Heart left ventricle (tissue), 16 donors: ENCODE measurements at regions of chr12 and their contacts with region 1.

Region 1: GRCh38 chr12:126874427-126875026 is 1392.4 kb upstream of the TMEM132C start:
- DNase-seq: peak; percentile 31 to 69 (median 41)
- ATAC-seq: peak in 3 of 4 donors; percentile 66 to 75 (median 71)
- H3K4me3 ChIP-seq: no peak overlapping the region
- H3K27ac ChIP-seq: no peak overlapping the region
- H3K4me1 ChIP-seq: no peaks in the 10 kb centered on the region
- H3K27me3 ChIP-seq: peaks cover 0 to 3% (median 0%) of the 10 kb centered on the region in 9 donors
- CTCF ChIP-seq: peak; percentile 62 to 90 (median 84)
- POLR2A ChIP-seq: no peak

Region 2: DNA sequence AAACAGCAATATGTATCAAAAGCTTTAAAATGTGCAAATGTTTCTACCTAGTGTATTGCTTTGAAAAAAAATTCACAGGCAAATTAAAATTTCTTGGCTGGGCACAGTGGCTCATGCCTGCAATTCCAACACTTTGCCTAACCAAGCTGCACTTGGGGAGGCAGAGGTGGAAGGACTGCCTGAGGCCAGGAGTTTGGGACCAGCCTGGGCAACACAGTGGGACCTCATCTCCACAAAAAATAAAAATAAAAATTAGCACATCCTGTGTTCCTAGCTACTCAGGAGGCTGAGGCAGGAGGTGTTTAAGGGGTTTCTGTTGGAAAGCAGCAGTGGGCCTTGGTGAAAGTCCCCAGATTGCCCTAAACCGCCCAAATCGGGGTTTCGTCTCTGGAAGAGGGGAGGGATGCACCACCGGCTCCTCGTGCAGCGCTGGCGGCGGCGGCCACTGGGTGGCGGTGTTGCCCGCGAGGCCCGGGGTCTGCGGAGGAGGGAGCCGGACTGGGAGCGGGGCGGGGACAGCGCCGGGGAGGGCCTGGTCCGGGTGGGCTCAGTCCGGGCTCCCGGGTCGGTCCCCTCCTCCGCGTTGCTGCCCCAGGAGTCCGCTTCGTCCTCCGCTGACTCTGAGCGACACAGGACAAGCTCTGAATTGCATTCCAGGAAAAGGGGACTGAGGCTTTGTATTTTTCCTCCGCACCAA is 1543.7 kb before region 1 on chr12:
- intact Hi-C with region 1: loop called in 3 of 10 experiments (anchors 5 to 10 kb)
- DNase-seq: peak; percentile 54 to 85 (median 61)
- ATAC-seq: peak; percentile 51 to 98 (median 90)
- H3K4me3 ChIP-seq: peak overlapping the region; percentile 11 to 59 (median 44)
- H3K27ac ChIP-seq: peak overlapping the region in 1 of 12 donors; percentile 32
- H3K4me1 ChIP-seq: peaks cover 0 to 11% (median 3%) of the 10 kb centered on the region in 12 donors
- H3K27me3 ChIP-seq: peaks cover 0 to 47% (median 17%) of the 10 kb centered on the region in 9 donors
- CTCF ChIP-seq: peak; percentile 70 to 95 (median 91)
- POLR2A ChIP-seq: no peak

Region 3: DNA sequence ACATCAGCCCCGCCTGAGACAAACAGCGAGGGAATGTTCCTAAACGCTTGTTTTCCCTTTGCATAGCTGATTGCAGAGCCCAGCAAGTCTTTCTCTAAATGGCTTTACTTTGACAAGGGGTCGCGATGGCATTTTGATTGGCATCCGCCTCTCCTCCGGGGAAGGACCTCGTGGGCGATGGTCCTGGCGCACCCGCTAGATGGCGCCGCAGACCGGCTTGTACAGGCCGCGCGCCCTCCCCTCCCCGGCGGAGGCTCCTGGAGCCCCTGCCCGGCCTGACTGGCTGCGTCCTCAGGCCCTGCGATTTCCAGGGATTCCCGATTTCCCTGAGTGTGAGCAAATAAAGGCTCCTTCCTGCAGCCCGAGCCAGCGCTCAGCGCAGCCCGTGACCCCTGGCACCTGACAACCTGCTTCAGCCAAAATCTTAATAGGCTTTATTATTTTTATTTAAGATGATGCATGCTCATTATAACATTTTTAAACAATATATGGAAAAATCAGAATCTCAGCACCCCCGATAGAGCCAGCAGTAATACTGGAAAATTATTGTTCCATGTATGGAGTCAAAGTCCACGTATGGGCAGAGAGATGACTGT is 1341.0 kb before region 1 on chr12:
- intact Hi-C with region 1: loop called in 4 of 10 experiments (anchors 5 to 10 kb)
- DNase-seq: peak in 1 of 5 donors; percentile 25
- ATAC-seq: peak in 3 of 4 donors; percentile 56 to 69 (median 68)
- H3K4me3 ChIP-seq: no peak overlapping the region
- H3K27ac ChIP-seq: no peak overlapping the region
- H3K4me1 ChIP-seq: no peaks in the 10 kb centered on the region
- H3K27me3 ChIP-seq: peaks cover 0 to 37% (median 4%) of the 10 kb centered on the region in 9 donors
- CTCF ChIP-seq: peak; percentile 33 to 71 (median 64)
- POLR2A ChIP-seq: no peak

Region 4: DNA sequence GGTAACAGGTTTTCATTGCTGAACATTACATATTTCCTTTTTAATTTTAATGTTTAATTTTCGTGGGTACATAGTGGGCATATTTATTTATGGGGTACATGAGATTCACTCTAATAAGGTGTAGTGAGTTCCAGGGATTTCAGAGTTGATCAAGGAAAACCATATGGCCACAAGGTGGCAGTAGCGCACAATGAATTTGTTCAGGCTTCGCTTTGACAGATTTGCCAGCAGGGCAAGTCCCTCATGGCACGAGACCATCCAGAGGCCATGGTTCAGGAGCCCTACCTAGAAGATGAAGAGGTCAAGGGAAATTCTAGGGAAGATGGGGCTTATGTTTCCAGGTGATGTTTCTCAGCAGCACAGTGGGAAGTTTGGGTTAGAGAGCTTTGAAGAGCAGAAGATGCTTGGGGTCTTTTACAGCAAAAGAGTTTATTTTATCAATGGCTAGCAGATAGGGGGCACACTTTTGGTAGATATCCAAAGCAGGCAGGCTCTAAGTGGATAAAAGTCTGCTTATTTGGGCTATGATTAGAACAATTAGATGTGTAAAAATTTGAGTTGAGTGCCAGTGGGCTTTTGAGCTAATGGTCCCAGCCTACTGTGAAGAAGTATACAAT is 804.9 kb before region 1 on chr12:
- intact Hi-C with region 1: loop called in 1 of 10 experiments (anchors 10 kb)
- DNase-seq: no peak
- ATAC-seq: no peak
- H3K4me3 ChIP-seq: no peak overlapping the region
- H3K27ac ChIP-seq: no peak overlapping the region
- H3K4me1 ChIP-seq: no peaks in the 10 kb centered on the region
- H3K27me3 ChIP-seq: peaks cover 0 to 3% (median 0%) of the 10 kb centered on the region in 9 donors
- CTCF ChIP-seq: peak in 11 of 12 donors; percentile 13 to 50 (median 39)
- POLR2A ChIP-seq: no peak

Region 5: GRCh38 chr12:126784328-126784921 is 90.1 kb before region 1 on chr12:
- intact Hi-C with region 1: loop called in 6 of 10 experiments (anchors 1 to 10 kb)
- DNase-seq: peak in 2 of 5 donors; percentile 20 to 36
- ATAC-seq: no peak
- H3K4me3 ChIP-seq: no peak overlapping the region
- H3K27ac ChIP-seq: no peak overlapping the region
- H3K4me1 ChIP-seq: no peaks in the 10 kb centered on the region
- H3K27me3 ChIP-seq: peaks cover 0 to 4% (median 0%) of the 10 kb centered on the region in 9 donors
- CTCF ChIP-seq: peak in 11 of 12 donors; percentile 32 to 58 (median 42)
- POLR2A ChIP-seq: no peak

Region 6: GRCh38 chr12:126789963-126790362 is 84.6 kb before region 1 on chr12:
- intact Hi-C with region 1: loop called in 3 of 10 experiments (anchors 5 to 10 kb)
- DNase-seq: no peak
- ATAC-seq: no peak
- H3K4me3 ChIP-seq: no peak overlapping the region
- H3K27ac ChIP-seq: no peak overlapping the region
- H3K4me1 ChIP-seq: no peaks in the 10 kb centered on the region
- H3K27me3 ChIP-seq: no peaks in the 10 kb centered on the region
- CTCF ChIP-seq: no peak
- POLR2A ChIP-seq: no peak